ENCODE measurements at regions of chr12 and their contacts with region 1.

Region 1: DNA sequence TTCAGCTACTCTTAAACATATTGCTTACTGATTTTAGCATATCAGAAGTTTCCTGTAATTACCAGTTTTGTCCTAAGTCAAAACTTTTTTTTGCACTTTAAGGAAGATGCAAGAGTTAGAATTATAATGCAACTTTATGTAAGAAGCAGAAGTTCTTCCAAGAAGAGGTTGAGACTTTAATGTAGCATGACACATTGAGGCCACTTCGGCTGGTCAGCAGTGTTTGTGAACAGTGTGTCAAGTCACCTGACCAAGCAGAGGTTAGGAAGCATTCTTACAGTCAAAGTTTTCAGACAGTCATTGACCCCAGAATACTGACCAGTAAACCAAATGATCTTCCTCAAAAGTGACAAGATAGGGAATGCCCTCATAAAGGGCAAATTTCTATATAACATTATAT is 15.2 kb downstream of the FGFR1OP2 start:
- DNase-seq: peak in 2 of 5 donors; percentile 10 to 20
- H3K4me3 ChIP-seq: no peak overlapping the region
- H3K27ac ChIP-seq: no peak overlapping the region
- H3K4me1 ChIP-seq: peaks cover 0 to 4% (median 0%) of the 10 kb centered on the region in 3 donors
- H3K27me3 ChIP-seq: no peaks in the 10 kb centered on the region
- CTCF ChIP-seq: no peak

Region 2: DNA sequence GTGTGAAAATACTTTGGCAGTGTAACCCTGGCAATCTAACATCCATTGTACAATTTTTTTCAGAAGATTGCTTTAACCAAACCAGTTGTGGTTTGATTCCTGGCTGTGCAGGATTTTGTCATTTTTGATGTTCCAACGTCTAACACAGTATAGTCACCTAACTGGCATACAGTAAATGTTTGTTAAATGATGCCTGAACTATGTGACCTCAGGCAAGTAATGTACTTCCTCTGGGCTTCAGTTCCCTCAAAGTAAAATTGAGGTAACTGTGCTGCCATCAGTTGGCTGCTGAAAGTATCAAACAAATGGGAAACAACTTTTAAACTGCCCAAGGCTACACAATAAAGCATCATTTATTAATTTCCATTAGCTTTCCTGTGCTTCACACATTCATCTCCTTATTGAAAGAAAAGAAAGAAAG is 56.4 kb after region 1 on chr12:
- intact Hi-C with region 1: loop called (anchors 10 kb)
- DNase-seq: no peak
- H3K4me3 ChIP-seq: no peak overlapping the region
- H3K27ac ChIP-seq: peak overlapping the region in 1 of 2 donors; percentile 8
- H3K4me1 ChIP-seq: peaks cover 2 to 18% (median 7%) of the 10 kb centered on the region in 3 donors
- H3K27me3 ChIP-seq: no peaks in the 10 kb centered on the region
- CTCF ChIP-seq: peak; percentile 13